Esophagus squamous epithelium (tissue), 5 donors: ENCODE measurements at regions of chr11 and their contacts with region 1.

Region 1: DNA sequence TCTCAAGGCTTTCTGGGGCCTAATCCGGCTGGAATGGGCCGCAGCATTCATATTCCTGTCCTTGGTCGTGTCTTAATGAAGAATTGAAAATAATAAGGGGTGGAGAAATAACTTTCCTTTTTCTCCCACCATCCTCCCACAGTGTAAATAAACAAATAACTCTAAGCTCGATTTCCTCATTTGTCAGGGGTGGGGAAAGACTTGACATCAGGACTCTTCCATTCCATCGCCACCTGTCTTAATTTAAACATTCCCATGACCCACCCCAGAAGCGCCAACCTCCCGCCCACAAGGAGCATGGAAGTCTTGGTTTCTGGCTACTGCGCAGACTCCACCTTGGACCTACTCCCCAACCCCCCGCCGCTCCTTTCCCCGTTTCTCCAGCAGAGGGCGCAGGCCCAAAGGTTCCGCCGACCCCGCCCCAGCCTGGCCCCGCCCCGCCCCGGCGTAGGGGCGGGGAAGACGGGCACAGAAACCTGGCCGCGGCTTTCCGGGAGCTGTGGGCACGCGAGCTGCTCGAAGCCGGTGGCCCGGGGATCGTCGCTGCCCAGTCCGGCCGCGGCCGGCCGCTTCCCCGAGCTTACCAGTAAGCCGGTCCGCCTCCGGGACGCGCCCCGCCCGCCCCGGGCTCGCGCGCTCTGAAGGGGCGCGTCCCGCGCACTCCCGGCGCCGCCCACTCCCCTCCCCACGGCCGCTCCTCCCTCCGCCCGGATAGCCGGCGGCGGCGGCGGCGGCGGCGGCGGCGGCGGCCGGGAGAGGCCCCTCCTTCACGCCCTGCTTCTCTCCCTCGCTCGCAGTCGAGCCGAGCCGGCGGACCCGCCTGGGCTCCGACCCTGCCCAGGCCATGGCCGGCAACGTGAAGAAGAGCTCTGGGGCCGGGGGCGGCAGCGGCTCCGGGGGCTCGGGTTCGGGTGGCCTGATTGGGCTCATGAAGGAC is at the start of gene CBL:
- DNase-seq: peak; percentile 65
- H3K4me3 ChIP-seq: peak within 1 kb of the TSS; percentile 85 to 99 (median 96)
- H3K27ac ChIP-seq: peak within 1 kb of the TSS; percentile 95 to 99 (median 98)
- H3K4me1 ChIP-seq: peaks cover 16 to 48% (median 16%) of the 10 kb centered on the region in 3 donors
- H3K27me3 ChIP-seq: no peaks in the 10 kb centered on the region
- CTCF ChIP-seq: peak; percentile 91 to 98 (median 93)
- POLR2A ChIP-seq: peak in 1 of 4 donors; percentile 79
- total RNA-seq, gene CBL: 9.9 to 14.2 (median 12.4) TPM

Region 2: DNA sequence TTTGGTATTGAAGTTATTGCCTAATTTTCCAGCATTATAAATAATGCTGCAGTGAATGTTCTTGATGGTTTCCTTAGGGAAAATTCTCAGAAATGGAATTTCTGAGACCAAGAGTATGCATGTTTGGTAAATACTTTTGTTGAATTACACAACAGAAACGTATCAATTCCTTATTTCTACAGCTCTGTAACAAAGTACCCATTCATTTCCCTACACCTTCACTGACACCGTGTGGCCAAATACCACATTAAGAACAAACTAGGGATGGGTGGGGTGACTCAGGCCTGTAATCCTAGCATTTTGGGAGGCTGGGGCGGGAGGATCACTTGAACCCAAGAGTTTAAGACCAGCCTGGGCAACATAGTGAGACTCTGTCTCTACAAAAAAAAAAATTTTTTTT is 89.3 kb after region 1 on chr11:
- intact Hi-C with region 1: loop called (anchors 10 kb)
- DNase-seq: no peak
- H3K4me3 ChIP-seq: no peak overlapping the region
- H3K27ac ChIP-seq: no peak overlapping the region
- H3K4me1 ChIP-seq: peaks cover 0 to 6% (median 0%) of the 10 kb centered on the region in 3 donors
- H3K27me3 ChIP-seq: no peaks in the 10 kb centered on the region
- CTCF ChIP-seq: no peak
- POLR2A ChIP-seq: no peak

Region 3: DNA sequence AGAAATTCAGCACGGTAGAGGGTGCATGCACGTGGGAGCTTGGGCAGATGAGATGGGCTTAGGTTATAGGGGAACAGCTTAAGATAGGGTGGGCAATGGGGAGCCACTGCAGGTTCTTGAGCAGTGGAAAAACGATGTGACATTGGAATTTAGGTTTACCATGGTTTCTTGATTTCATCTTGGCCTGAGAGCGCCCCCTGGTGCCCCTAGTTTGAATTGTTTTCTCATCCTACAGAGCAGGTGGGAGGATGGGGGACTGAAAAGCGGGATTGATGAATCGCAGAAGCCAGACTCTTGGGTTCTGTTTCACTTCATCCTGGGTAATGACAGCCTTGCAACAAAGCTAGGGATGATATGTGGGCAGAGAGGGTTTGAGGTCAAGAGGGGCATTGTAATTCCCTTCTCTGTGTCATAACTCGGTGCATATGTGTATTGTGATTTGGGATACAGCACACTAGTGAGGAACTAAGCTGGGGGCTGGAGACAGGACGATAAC is 117.7 kb after region 1 on chr11:
- intact Hi-C with region 1: loop called (anchors 5 kb)
- DNase-seq: no peak
- H3K4me3 ChIP-seq: no peak overlapping the region
- H3K27ac ChIP-seq: peak overlapping the region in 1 of 4 donors; percentile 7
- H3K4me1 ChIP-seq: peaks cover 19 to 41% (median 32%) of the 10 kb centered on the region in 3 donors
- H3K27me3 ChIP-seq: peaks cover 0 to 5% (median 0%) of the 10 kb centered on the region in 4 donors
- CTCF ChIP-seq: peak; percentile 42 to 90 (median 71)
- POLR2A ChIP-seq: no peak

Region 4: GRCh38 chr11:119402470-119402869 is 196.6 kb after region 1 on chr11:
- intact Hi-C with region 1: no loop called
- DNase-seq: no peak
- H3K4me3 ChIP-seq: no peak overlapping the region
- H3K27ac ChIP-seq: no peak overlapping the region
- H3K4me1 ChIP-seq: no peaks in the 10 kb centered on the region
- H3K27me3 ChIP-seq: no peaks in the 10 kb centered on the region
- CTCF ChIP-seq: no peak
- POLR2A ChIP-seq: no peak